ENCODE measurements at regions of chr3 and their contacts with region 1.

Region 1: DNA sequence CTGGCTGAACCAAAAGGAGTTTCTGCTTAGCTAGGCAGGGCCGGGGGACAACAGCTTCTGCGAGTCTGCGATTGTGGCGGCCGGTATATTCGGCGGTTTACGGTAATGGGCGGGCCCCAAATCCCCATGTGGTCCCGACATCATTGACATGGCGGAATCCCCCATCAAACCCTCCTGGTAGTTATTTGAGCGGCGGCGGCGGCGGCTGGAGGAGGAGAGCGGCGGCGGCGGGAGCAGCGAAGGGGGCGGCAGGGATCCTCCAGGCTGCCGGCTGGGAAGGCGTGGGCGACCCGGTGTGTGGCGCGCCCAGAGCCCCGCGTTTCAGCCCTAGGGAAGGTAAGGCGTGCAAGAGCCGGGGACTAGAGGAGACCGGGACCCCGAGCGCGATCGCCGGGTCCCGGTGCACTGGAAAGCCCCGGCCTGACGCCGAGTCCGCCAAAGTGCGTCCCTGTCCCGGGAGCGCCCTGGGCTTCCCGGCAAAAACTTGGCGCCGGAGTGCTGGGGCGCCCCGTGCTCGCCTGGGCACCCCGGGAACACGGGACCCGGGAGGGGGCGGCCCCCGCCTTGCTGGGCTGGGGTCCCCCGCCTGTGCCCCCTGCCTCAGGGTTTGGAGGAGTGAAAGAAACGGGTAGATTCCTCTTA is at the start of gene FNDC3B:
- DNase-seq: peak; percentile 95 to 99 (median 96)
- ATAC-seq: peak; percentile 89
- H3K4me3 ChIP-seq: peak within 1 kb of the TSS; percentile 98
- H3K4me1 ChIP-seq: peaks cover 27% of the 10 kb centered on the region
- CTCF ChIP-seq: no peak
- total RNA-seq, gene FNDC3B: 107 to 132 (median 126) TPM

Region 2: GRCh38 chr3:171658841-171659240 is 380.7 kb before region 1 on chr3:
- intact Hi-C with region 1: no loop called
- DNase-seq: no peak
- ATAC-seq: no peak
- H3K4me3 ChIP-seq: no peak overlapping the region
- H3K4me1 ChIP-seq: no peaks in the 10 kb centered on the region
- CTCF ChIP-seq: no peak

Region 3: GRCh38 chr3:172332256-172333041 is 292.9 kb after region 1 on chr3:
- intact Hi-C with region 1: loop called in 1 of 2 experiments (anchors 10 kb)
- DNase-seq: peak in 2 of 3 donors; percentile 50 to 83
- ATAC-seq: peak; percentile 97
- H3K4me3 ChIP-seq: no peak overlapping the region
- H3K4me1 ChIP-seq: no peaks in the 10 kb centered on the region
- CTCF ChIP-seq: peak; percentile 68

Measured in mucosa of descending colon (tissue), 3 donors.